ENCODE measurements at regions of chr11 and their contacts with region 1.

Region 1: GRCh38 chr11:16356057-16356760 is at the start of gene SOX6:
- DNase-seq: peak; percentile 94
- ATAC-seq: peak; percentile 100
- H3K4me3 ChIP-seq: peak within 1 kb of the TSS in 2 of 3 experiments; percentile 31 to 36; a peak in 2 of 6 replicates
- H3K27ac ChIP-seq: peak within 1 kb of the TSS; percentile 63
- H3K4me1 ChIP-seq: peaks cover 65% of the 10 kb centered on the region
- H3K27me3 ChIP-seq: no peaks in the 10 kb centered on the region
- CTCF ChIP-seq: peak; percentile 53
- EP300 ChIP-seq: peak in 1 of 2 experiments; percentile 59; a peak in 1 of 4 replicates
- POLR2A ChIP-seq: no peak
- RAD21 ChIP-seq: no peak
- total RNA-seq, gene SOX6: 11.1 and 11.2 TPM in 2 replicates

Region 2: DNA sequence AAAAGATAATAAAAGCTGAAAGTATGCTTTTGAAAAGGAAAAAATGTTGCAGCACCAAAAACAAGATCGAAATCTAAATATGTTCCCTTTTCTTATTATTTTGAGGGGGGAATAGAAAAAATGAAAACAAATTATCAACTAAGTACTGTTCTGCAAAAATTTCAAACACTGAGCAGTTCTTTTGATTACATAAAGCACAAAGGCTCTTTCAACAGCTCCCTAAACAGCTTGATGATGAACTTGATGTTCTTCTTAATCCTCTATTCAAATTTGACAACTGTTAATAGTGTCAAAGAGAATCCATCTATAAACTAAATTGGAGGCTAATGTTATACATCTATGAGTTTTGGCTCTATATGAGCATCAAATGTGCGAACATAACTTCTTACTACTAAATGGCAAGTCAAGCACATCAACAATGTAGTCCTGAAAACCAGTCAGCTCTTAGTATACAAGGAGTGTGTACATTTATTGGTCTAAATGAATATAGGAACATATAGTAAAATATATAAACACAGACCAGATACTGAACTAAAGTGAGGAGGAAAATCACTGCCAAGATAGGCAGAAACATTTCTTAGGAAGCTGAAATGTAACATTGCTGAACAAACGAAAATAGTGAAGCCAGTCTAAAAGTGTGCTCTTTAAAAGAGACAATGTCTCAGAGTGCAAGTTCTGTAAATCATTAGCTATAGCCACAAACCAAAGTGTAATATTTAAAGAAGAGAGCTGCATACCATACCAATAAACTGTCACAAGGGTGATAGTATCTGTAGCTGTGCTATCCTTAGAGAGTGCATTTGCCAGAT is 94.2 kb before region 1 on chr11:
- CTCF ChIA-PET with region 1: no interaction called
- POLR2A ChIA-PET with region 1: no interaction called
- in situ Hi-C with region 1: no loop called
- intact Hi-C with region 1: loop called (anchors 5 kb)
- DNase-seq: peak; percentile 64
- ATAC-seq: peak; percentile 100
- H3K4me3 ChIP-seq: peak overlapping the region in 2 of 3 experiments; percentile 25 to 27; a peak in 1 of 6 replicates
- H3K27ac ChIP-seq: peak overlapping the region; percentile 43
- H3K4me1 ChIP-seq: peaks cover 32% of the 10 kb centered on the region
- H3K27me3 ChIP-seq: no peaks in the 10 kb centered on the region
- CTCF ChIP-seq: no peak
- EP300 ChIP-seq: no peak
- POLR2A ChIP-seq: no peak
- RAD21 ChIP-seq: no peak

Region 3: DNA sequence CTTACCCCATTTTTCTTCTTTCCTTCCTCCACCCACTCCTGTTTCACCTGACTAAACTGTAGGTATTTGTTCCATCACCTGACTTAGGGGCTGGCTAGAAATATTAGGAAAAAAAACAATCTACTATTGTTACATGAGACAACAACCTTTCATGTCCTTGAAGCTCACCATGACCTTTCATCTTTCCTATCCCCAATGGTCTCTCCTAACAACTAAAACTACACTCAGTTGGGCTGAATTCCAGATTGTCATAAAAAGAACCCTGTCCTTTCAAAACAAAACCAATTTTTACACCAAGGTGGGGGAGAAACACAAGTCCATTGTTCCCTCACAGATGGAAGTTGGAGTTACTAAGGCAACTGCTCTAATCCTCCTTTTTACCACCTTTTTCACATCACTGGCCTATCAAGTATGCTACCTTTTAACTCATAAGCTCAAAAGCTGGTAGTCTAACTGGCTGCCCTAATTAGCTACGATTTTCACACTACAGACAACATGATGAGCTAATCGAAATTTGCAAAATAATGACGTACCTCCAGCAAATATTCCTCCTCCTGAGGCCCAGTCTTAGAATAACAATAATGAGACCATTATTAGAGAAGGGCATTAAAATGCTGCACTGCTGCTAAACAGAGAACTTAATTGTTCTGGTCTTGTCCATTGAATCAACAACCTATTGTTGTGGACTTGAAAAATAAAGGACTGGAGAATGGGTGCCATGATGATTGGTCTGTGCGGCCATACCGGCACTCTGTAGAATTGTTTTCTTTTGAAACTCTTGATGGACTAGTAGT is 46.6 kb after region 1 on chr11:
- CTCF ChIA-PET with region 1: no interaction called
- POLR2A ChIA-PET with region 1: no interaction called
- in situ Hi-C with region 1: no loop called
- intact Hi-C with region 1: loop called (anchors 2 kb)
- DNase-seq: peak; percentile 92
- ATAC-seq: peak; percentile 88
- H3K4me3 ChIP-seq: peak overlapping the region in 1 of 3 experiments; percentile 2; a peak in 1 of 6 replicates
- H3K27ac ChIP-seq: peak overlapping the region; percentile 72
- H3K4me1 ChIP-seq: peaks cover 68% of the 10 kb centered on the region
- H3K27me3 ChIP-seq: no peaks in the 10 kb centered on the region
- CTCF ChIP-seq: no peak
- EP300 ChIP-seq: peak; percentile 22 to 56; a peak in 1 of 4 replicates
- POLR2A ChIP-seq: no peak
- RAD21 ChIP-seq: no peak